T-cell (primary cell): ENCODE measurements at regions of chr3 and their contacts with region 1.

Region 1: DNA sequence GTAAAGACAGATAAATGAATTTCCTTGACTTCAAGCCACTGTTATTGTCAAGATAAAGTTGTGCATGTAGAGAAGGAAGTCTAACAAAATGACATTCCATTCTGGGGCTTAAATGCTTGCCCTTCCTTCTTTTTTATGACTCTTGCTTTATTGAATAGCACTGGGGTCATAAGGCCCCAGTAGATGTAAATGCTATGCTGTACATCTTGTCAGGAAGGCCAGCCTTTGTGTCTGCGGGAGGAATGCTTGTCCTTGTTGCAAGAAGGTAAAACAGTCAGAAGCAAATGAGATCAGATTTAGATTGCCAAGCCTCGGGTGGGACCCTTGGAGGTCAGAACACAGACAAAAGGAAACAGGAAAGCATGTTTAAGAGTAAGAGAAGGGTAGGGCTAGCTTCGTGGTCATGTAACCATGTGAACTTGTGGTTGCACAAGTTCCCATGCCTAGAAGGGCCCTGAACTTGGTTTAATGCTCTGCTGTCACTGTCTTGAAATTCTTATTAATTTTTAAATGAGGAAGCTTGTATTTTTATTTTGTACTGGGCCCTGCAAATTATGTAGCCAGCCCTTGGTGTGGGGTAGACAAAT is 81.5 kb downstream of the PPM1L start:
- DNase-seq: peak in 3 of 35 experiments; percentile 5 to 7 (median 7)
- ATAC-seq: no peak
- H3K4me3 ChIP-seq: no peak overlapping the region
- H3K4me3 Mint-ChIP-seq: no peak overlapping the region
- H3K27ac ChIP-seq: no peak overlapping the region
- H3K27ac Mint-ChIP-seq: no peak overlapping the region
- H3K4me1 ChIP-seq: peaks cover 0 to 3% of the 10 kb centered on the region in 2 experiments
- H3K4me1 Mint-ChIP-seq: peaks cover 4 to 16% (median 8%) of the 10 kb centered on the region in 3 donors
- H3K27me3 ChIP-seq: no peaks in the 10 kb centered on the region
- H3K27me3 Mint-ChIP-seq: peaks cover 3 to 8% of the 10 kb centered on the region in 2 donors

Region 2: DNA sequence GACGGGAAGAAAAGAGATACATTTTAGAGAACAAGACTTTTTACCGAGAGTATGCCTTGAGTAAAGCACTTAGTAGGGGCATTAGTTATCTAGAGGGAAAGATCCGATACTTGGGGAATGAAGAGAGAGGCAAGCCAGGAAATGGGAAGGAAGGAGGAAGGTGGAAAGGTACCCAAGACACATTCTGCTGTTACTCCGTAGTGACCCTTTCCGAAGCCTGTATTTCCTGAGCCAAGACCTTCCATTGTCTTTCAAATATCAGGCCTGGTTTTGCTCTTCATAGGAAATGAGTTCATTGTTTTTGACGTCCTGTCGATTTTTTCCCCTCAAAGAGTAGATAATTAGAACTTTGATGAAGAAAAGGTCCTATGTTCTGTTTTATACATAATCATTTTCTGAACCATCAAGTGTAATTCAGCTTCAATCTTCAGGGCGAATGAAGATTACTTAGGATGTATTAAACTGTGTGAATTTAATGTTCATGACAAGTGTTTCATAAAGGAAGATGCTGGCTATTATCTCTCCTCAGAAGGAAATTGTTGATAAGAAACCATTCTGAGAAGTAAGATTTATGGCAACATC is 14.2 kb after region 1 on chr3:
- CTCF ChIA-PET with region 1: interaction called in 1 of 2 experiments, 9 read pairs
- POLR2A ChIA-PET with region 1: interaction called in 1 of 2 experiments, 13 read pairs
- DNase-seq: no peak
- ATAC-seq: no peak
- H3K4me3 ChIP-seq: no peak overlapping the region
- H3K4me3 Mint-ChIP-seq: no peak overlapping the region
- H3K27ac ChIP-seq: no peak overlapping the region
- H3K27ac Mint-ChIP-seq: no peak overlapping the region
- H3K4me1 ChIP-seq: no peaks in the 10 kb centered on the region
- H3K4me1 Mint-ChIP-seq: no peaks in the 10 kb centered on the region
- H3K27me3 ChIP-seq: no peaks in the 10 kb centered on the region
- H3K27me3 Mint-ChIP-seq: no peaks in the 10 kb centered on the region